K562 (cell line): ENCODE measurements at regions of chr6 and their contacts with region 1.

Region 1: DNA sequence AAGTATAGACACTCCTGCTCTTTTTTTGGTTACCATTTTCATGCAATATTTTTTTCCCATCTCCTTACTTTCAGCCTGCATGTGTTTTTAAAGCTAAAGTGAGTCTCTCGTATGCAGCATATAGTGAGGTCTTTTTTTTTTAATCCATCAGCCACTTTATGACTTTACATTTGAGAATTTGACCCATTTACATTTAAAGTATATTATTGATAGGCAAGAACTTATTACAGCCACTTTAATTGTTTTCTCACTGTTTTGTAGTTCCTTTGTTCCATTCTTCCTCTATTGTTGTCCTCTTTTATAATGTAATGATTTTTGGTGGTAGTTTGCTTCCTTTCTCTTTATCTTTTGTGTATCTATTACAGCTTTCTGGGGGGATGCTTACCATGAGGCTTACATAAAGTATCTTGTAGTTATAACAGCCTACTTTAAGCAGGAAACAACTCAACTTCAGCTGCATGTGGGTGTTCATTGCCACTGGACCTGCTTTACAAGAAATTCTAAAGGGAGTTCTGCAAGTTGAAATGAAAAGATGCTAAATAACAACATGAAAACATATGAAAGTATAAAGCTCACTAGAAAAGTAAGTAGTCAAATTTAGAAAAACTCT is 71.8 kb downstream of the TNFAIP3 start:
- DNase-seq: no peak
- ATAC-seq: no peak
- H3K4me3 ChIP-seq: no peak overlapping the region
- H3K27ac ChIP-seq: no peak overlapping the region
- H3K4me1 ChIP-seq: no peaks in the 10 kb centered on the region; a peak in 3 of 5 replicates
- H3K27me3 ChIP-seq: no peaks in the 10 kb centered on the region
- CTCF ChIP-seq: no peak
- EP300 ChIP-seq: no peak
- POLR2A ChIP-seq: no peak
- RAD21 ChIP-seq: peak in 1 of 2 experiments; percentile 2; a peak in 1 of 4 replicates

Region 2: GRCh38 chr6:137951064-137951597 is 12.3 kb after region 1 on chr6:
- CTCF ChIA-PET with region 1: no interaction called
- POLR2A ChIA-PET with region 1: interaction called, 13 read pairs
- in situ Hi-C with region 1: no loop called
- intact Hi-C with region 1: no loop called
- DNase-seq: no peak
- ATAC-seq: no peak
- H3K4me3 ChIP-seq: no peak overlapping the region
- H3K27ac ChIP-seq: no peak overlapping the region
- H3K4me1 ChIP-seq: peaks cover 0 to 11% of the 10 kb centered on the region in 2 experiments; a peak in 2 of 5 replicates
- H3K27me3 ChIP-seq: no peaks in the 10 kb centered on the region
- CTCF ChIP-seq: peak in 2 of 3 experiments; percentile 13 to 15; a peak in 1 of 6 replicates
- EP300 ChIP-seq: no peak
- POLR2A ChIP-seq: no peak
- RAD21 ChIP-seq: no peak